ENCODE measurements at regions of chr1 and their contacts with region 1.

Region 1: DNA sequence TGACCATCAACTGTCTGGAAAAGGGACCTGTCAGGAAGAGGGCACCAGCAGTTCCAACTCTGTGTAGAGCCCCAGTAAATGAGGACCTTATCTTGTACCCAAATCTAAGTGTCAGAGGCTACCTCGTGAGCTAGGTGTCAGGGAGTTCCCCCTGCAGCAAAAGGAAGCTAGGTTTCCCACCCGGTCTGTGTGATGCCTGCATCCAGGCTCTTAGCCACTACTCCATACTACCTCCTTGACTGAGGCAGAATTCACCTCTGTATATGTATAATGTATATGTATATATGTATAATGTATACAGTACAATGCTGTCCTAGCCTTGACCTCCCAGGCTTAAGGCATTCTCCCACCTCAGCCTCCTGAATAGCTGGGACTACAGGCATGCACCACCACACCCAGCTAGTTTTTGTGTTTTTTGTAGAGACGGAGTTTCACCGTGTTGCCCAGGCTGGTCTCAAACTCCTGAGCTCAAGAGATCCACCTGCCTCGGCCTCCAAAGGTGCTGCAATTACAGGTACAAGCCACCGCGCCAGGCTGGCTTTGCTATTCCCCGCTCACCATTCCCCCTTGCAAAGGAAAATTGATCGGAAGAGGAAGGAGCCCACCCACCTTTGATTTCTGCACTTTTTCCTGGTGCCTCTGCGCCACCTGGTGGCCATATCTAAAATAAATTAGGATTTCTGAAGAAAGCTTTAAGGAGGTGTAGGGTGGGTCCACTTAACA is 15.7 kb upstream of the LUZP1 start:
- DNase-seq: peak; percentile 72
- ATAC-seq: peak; percentile 96
- H3K4me3 Mint-ChIP-seq: no peak overlapping the region
- H3K27ac Mint-ChIP-seq: no peak overlapping the region
- H3K4me1 Mint-ChIP-seq: no peaks in the 10 kb centered on the region
- H3K27me3 Mint-ChIP-seq: peaks cover 10% of the 10 kb centered on the region
- CTCF ChIP-seq: peak; percentile 86

Region 2: GRCh38 chr1:22969304-22969709 is 215.1 kb before region 1 on chr1:
- CTCF ChIA-PET with region 1: interaction called, 14 read pairs
- POLR2A ChIA-PET with region 1: no interaction called
- DNase-seq: no peak
- ATAC-seq: no peak
- H3K4me3 Mint-ChIP-seq: no peak overlapping the region
- H3K27ac Mint-ChIP-seq: no peak overlapping the region
- H3K4me1 Mint-ChIP-seq: peaks cover 12% of the 10 kb centered on the region
- H3K27me3 Mint-ChIP-seq: peaks cover 17% of the 10 kb centered on the region
- CTCF ChIP-seq: no peak

Region 3: DNA sequence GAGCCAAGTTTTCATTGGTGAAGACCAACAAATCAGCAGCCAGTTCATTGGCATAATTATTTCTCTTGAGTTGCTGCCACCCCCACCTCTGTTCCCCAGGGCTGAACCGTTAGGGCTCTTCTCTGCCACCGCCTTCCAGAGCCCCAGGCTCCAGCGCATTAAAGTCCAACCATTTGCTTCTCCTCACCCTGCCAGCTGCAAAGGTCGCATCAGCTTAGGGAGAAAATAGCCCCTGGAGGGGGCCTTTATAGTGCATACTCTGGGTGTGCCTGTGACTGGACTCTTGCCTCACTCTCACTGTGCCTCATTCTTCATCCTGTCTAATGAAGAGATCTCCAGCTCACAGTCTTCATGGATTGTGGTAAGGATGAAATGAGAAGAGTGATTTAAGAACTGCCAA is 114.7 kb before region 1 on chr1:
- CTCF ChIA-PET with region 1: no interaction called
- POLR2A ChIA-PET with region 1: no interaction called
- DNase-seq: no peak
- ATAC-seq: no peak
- H3K4me3 Mint-ChIP-seq: no peak overlapping the region
- H3K27ac Mint-ChIP-seq: no peak overlapping the region
- H3K4me1 Mint-ChIP-seq: no peaks in the 10 kb centered on the region
- H3K27me3 Mint-ChIP-seq: no peaks in the 10 kb centered on the region
- CTCF ChIP-seq: no peak

Region 4: DNA sequence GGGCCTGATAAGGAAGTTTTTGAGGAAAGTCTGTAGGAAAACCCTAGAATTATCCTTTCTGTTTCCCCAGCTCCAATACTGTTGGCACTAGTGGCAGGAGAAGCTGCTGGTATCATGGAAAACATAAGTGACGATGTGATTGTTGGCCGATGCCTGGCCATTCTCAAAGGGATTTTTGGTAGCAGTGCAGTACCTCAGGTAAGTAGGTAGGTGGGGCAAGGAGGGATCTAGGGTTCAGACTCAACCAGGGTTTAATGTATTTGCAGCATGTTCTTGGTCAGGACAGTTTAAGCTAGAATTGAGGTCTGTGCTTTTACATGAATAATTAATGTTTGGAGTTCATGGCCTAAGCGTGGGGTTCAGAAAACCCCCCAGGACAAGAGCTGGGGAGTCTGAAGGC is 103.0 kb before region 1 on chr1:
- CTCF ChIA-PET with region 1: interaction called, 32 read pairs
- POLR2A ChIA-PET with region 1: interaction called, 4 read pairs
- DNase-seq: peak; percentile 22
- ATAC-seq: peak; percentile 75
- H3K4me3 Mint-ChIP-seq: no peak overlapping the region
- H3K27ac Mint-ChIP-seq: peak overlapping the region; percentile 31
- H3K4me1 Mint-ChIP-seq: peaks cover 7% of the 10 kb centered on the region; the same call in 1 of the 2 replicates
- H3K27me3 Mint-ChIP-seq: no peaks in the 10 kb centered on the region
- CTCF ChIP-seq: peak; percentile 26; the same call in 1 of the 2 replicates

Region 5: DNA sequence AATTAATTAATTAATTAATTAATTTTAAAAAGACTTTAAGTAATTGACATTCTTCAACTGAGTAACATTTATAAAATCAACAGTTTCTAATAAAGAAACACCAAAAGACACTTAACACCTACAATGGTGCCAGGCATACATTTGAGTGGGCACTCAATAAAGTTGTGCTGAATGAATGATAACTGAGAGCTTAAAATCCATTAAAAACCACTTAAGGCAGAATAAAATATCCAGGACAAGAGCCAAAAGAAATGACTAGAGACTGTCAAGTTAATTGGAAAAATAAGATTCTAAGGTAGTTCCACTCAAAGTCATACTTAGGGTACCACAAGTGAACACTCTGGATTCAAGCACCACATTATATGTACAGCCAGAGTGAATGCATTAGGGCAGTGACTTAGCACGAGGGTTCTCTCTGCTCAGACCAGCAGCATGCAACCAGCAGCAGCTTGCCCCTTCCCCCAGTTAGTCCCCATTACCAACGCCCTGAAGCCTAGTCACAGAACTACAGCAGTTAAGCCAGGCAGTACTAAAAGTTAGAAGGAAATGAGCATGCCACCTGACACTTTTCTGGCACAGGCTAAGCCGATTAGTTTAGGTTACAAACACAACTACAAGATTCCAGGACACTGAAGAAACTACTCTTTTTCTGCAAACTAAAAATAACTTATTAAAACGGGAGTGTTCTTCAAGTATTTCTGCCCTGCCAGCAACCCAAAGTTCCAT is 62.2 kb before region 1 on chr1:
- CTCF ChIA-PET with region 1: interaction called, 12 read pairs
- POLR2A ChIA-PET with region 1: no interaction called
- DNase-seq: no peak
- ATAC-seq: peak; percentile 60
- H3K4me3 Mint-ChIP-seq: no peak overlapping the region
- H3K27ac Mint-ChIP-seq: peak overlapping the region; percentile 8; the same call in 1 of the 2 replicates
- H3K4me1 Mint-ChIP-seq: peaks cover 46% of the 10 kb centered on the region
- H3K27me3 Mint-ChIP-seq: no peaks in the 10 kb centered on the region
- CTCF ChIP-seq: no peak

Region 6: GRCh38 chr1:23168457-23169194 is 15.7 kb before region 1 on chr1 and contains the start of gene LUZP1:
- CTCF ChIA-PET with region 1: interaction called, 29 read pairs
- POLR2A ChIA-PET with region 1: interaction called, 3 read pairs
- DNase-seq: peak; percentile 88
- ATAC-seq: peak; percentile 76
- H3K4me3 Mint-ChIP-seq: peak within 1 kb of the TSS; percentile 98
- H3K27ac Mint-ChIP-seq: peak within 1 kb of the TSS; percentile 99
- H3K4me1 Mint-ChIP-seq: peaks cover 43% of the 10 kb centered on the region
- H3K27me3 Mint-ChIP-seq: no peaks in the 10 kb centered on the region
- CTCF ChIP-seq: no peak
- total RNA-seq, gene LUZP1: 42.0 to 43.4 TPM (median 42.7 TPM) in 3 replicates

Region 7: DNA sequence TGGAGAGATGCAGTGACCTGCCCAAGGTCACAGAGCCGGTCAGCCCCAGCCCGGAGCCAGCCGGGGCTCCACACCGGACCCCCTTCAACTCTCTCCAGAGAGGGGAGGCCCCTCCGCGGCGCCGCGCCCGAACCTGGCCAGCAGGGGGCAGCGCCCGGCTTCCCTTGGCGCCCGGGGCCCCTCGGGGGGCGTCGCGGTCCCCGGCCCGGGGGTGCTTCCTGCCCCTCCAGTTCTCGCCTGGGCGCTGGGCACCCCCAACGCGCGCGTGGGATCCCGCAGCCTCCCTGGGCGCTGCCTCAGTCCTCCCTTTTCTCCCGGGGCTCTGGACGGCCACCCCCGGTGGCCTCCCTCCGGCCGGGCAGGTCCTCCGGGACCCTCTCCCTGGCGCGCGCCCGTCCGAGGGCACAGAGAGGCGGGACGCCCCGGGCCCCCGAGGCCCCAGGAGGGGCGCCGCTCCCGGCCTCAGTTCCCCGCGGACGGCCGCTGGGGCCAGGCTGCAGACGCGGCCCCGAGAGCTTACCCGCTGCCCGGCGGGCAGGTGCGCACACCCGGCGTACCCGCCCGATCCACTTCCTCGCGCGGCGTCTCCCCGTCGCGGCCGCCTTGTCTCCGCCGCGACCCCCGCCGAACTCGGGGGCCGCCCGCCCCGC is 32.5 kb after region 1 on chr1:
- CTCF ChIA-PET with region 1: interaction called, 22 read pairs
- POLR2A ChIA-PET with region 1: no interaction called
- DNase-seq: peak; percentile 72
- ATAC-seq: peak; percentile 63
- H3K4me3 Mint-ChIP-seq: peak overlapping the region; percentile 65
- H3K27ac Mint-ChIP-seq: no peak overlapping the region
- H3K4me1 Mint-ChIP-seq: peaks cover 20% of the 10 kb centered on the region
- H3K27me3 Mint-ChIP-seq: peaks cover 27% of the 10 kb centered on the region
- CTCF ChIP-seq: peak; percentile 94

Region 8: DNA sequence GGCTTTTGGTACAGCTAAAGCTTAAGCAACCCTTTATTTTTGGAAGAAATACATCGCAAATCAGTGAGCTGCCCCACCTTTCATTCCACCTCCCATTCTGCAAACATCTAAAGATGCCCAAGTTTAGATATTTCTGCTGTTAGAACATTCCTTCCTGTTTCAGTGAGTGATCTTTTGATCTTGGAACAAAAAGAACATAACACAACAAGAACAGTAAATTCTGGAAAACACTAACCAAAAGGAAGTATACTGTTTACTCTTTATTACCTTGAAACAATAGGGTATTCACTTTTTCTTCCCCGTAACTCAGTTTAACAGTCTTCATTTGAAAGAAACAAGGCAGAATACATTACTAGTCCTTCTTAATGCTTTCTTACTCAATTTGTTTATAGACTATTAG is 119.2 kb after region 1 on chr1:
- CTCF ChIA-PET with region 1: no interaction called
- POLR2A ChIA-PET with region 1: no interaction called
- DNase-seq: no peak
- ATAC-seq: no peak
- H3K4me3 Mint-ChIP-seq: no peak overlapping the region
- H3K27ac Mint-ChIP-seq: no peak overlapping the region
- H3K4me1 Mint-ChIP-seq: peaks cover under 1% of the 10 kb centered on the region; the same call in 1 of the 2 replicates
- H3K27me3 Mint-ChIP-seq: no peaks in the 10 kb centered on the region
- CTCF ChIP-seq: no peak

Region 9: DNA sequence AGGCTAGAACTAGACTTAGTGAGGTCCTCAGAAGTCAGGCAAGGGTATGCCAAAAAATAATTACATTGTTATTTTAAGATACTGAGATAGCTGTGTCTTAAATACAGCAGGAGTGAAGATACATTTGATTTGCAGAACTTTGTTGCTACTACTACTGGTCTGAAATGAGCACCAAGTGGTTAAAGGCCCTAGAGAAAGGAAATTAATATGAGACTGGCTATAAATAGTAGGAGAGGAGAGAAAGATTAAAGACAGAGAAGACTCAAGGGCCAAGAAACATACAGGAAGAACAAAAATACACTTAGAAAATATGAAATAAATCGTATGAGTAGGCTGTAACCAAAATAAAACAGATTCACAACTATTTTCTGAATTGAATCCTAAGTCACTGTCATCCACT is 138.4 kb after region 1 on chr1:
- CTCF ChIA-PET with region 1: no interaction called
- POLR2A ChIA-PET with region 1: no interaction called
- DNase-seq: no peak
- ATAC-seq: no peak
- H3K4me3 Mint-ChIP-seq: no peak overlapping the region
- H3K27ac Mint-ChIP-seq: no peak overlapping the region
- H3K4me1 Mint-ChIP-seq: no peaks in the 10 kb centered on the region
- H3K27me3 Mint-ChIP-seq: no peaks in the 10 kb centered on the region
- CTCF ChIP-seq: no peak